ENCODE measurements at regions of chr2 and their contacts with region 1.

Region 1: GRCh38 chr2:68766376-68766845 is 31.8 kb downstream of the ARHGAP25 start:
- DNase-seq: peak; percentile 75
- H3K4me3 Mint-ChIP-seq: peak overlapping the region; percentile 65
- H3K27ac Mint-ChIP-seq: peak overlapping the region; percentile 92
- H3K4me1 Mint-ChIP-seq: peaks cover 96% of the 10 kb centered on the region
- H3K27me3 Mint-ChIP-seq: no peaks in the 10 kb centered on the region

Region 2: GRCh38 chr2:68742626-68743415 is 23.6 kb before region 1 on chr2:
- intact Hi-C with region 1: loop called (anchors 1 kb)
- DNase-seq: no peak
- H3K4me3 Mint-ChIP-seq: peak overlapping the region; percentile 53
- H3K27ac Mint-ChIP-seq: peak overlapping the region; percentile 55
- H3K4me1 Mint-ChIP-seq: peaks cover 92% of the 10 kb centered on the region
- H3K27me3 Mint-ChIP-seq: no peaks in the 10 kb centered on the region

Region 3: DNA sequence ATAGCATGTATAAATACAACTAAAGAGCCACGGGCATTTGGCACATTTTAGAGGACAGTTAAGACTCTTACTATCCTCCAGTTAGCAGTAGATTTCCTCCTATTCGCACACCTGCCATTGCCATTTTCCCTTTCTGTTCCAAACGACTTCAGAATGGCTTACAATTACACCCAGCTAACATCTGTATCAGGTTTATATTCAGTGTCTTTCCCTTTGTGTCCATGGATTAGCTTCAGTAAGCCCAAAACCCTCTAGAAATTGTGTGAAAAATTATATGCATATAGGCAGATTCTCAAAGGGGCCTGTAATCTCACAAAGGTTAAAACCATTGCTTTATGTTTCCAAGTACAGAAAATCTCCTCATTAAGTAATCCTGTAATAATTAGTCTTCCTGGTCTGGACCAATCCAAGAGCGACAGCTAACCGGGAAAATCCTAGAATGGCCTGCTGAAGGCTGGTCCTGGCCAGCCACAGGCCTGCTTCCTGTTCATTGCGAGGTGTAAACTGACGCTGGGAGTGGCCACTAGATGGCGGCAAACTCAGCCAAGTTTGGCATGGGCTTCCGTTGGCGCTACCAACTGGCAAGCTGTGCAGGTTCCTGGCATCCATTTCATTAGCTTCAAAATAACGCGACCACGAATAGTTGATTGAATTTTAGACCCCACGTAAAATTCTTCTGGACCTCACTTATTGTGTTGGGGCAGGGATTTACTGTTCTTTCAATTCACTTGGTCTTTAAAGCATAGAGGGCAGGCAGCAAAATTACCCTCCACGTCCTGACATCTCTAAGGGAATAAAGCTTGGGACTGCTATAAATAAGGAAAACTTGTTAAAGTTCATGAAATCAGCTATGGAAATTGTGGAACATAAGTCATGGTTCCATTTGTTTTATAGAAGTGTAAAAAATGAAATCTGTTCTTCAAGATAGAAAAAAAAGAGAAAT is 14.7 kb before region 1 on chr2:
- intact Hi-C with region 1: loop called (anchors 1 kb)
- DNase-seq: peak; percentile 78
- H3K4me3 Mint-ChIP-seq: peak overlapping the region; percentile 38
- H3K27ac Mint-ChIP-seq: peak overlapping the region; percentile 84
- H3K4me1 Mint-ChIP-seq: peaks cover 91% of the 10 kb centered on the region
- H3K27me3 Mint-ChIP-seq: no peaks in the 10 kb centered on the region

Region 4: GRCh38 chr2:69054431-69054830 is 288.0 kb after region 1 on chr2:
- intact Hi-C with region 1: loop called (anchors 10 kb)
- DNase-seq: peak; percentile 8
- H3K4me3 Mint-ChIP-seq: no peak overlapping the region
- H3K27ac Mint-ChIP-seq: no peak overlapping the region
- H3K4me1 Mint-ChIP-seq: peaks cover 14% of the 10 kb centered on the region
- H3K27me3 Mint-ChIP-seq: peaks cover 54% of the 10 kb centered on the region